Posterior vena cava (tissue), 2 donors: ENCODE measurements at regions of chr7 and their contacts with region 1.

Region 1: GRCh38 chr7:7795203-7796135 is 77.1 kb upstream of the RPA3 start:
- DNase-seq: no peak

Region 2: DNA sequence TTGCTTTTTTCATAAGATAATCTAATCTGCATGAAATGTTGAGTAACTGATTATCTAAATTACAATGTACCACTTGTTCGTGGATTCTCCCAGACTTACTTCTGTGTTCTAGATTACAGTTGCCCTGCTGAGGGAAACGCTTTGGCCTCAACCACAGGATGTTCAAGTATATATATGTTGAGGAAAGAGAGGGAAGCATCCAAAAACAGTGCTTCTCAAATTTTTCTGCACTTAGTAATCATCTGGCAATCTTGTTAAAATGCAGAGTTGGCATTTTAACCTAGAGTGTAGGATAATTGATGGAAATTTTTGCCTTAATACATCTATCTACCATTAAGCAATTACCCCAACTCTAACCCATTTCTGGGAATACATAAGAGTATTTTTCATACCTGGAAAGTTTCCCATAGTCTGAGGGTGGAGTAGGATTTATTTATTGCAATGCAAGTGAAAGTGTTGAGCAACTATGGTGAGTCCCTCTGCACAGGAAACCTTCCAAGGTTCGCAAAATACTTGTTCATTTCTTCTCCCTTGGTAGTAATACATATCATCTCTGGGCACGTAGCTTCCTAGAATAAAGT is 672.7 kb before region 1 on chr7:
- intact Hi-C with region 1: no loop called
- DNase-seq: no peak

Region 3: DNA sequence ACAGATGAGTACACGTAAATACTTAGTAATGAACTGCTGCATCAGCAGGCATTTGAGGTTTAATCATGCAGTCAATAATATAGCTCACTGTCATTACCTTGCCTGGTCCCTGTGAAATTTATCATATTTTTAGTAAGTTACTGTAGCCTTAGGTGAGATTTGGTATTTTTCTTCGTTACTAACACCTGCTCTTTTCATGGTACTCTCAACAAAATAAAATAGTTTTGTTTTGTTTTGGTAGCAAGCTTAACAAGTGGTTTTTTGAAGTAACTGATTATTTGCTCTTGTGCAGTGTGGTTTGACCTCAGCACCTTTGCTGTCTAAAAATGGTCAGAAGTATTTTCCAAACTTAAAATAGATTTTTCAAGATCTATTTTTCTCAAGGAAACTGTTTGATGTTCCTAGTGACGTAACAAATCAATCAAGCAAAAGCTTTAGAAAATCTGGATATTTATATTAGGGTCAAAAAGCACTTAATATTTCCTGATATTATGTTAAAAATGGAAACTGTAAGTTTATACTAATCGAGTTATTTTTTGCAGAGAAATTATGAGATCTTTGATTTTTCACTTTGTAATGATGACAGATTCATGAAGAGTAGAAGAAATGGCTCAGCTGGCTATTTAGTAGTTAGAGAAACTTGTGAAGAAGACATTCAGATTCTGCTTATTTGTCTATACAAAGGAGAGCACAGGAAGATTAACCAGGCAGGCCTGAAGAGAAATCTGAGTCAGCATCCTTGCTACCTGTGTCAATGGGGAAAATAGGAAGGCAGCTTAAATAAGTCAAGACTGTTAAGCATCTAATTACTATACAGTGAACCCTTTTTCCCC is 56.0 kb before region 1 on chr7:
- intact Hi-C with region 1: no loop called
- DNase-seq: no peak

Region 4: GRCh38 chr7:8290645-8291314 is 495.3 kb after region 1 on chr7:
- intact Hi-C with region 1: loop called in 1 of 2 experiments (anchors 5 kb)
- DNase-seq: no peak